ENCODE measurements at regions of chr3 and their contacts with region 1.

Region 1: GRCh38 chr3:159252772-159253384 is 451.0 kb downstream of the MFSD1 start:
- DNase-seq: peak; percentile 28
- CTCF ChIP-seq: peak; percentile 22

Region 2: GRCh38 chr3:158918008-158918407 is 334.9 kb before region 1 on chr3:
- in situ Hi-C with region 1: loop called (anchors 10 kb)
- DNase-seq: peak; percentile 24
- CTCF ChIP-seq: peak; percentile 61

Region 3: GRCh38 chr3:158991146-158991705 is 261.7 kb before region 1 on chr3:
- in situ Hi-C with region 1: no loop called
- DNase-seq: no peak
- CTCF ChIP-seq: no peak

Region 4: GRCh38 chr3:159130108-159130507 is 122.8 kb before region 1 on chr3:
- in situ Hi-C with region 1: loop called (anchors 10 kb)
- DNase-seq: no peak
- CTCF ChIP-seq: no peak

Region 5: GRCh38 chr3:159362496-159362895 is 109.6 kb after region 1 on chr3:
- in situ Hi-C with region 1: no loop called
- DNase-seq: no peak
- CTCF ChIP-seq: no peak

Region 6: GRCh38 chr3:159418571-159419526 is 166.0 kb after region 1 on chr3:
- in situ Hi-C with region 1: no loop called
- DNase-seq: no peak
- CTCF ChIP-seq: no peak